ENCODE measurements at regions of chr9 and their contacts with region 1.

Region 1: GRCh38 chr9:109451311-109452025 is 46.6 kb downstream of the PTPN3 start:
- DNase-seq: no peak
- ATAC-seq: no peak
- H3K4me3 Mint-ChIP-seq: no peak overlapping the region
- H3K27ac Mint-ChIP-seq: no peak overlapping the region
- H3K4me1 Mint-ChIP-seq: peaks cover 21% of the 10 kb centered on the region
- H3K27me3 Mint-ChIP-seq: peaks cover 18% of the 10 kb centered on the region

Region 2: GRCh38 chr9:109411798-109412352 is 39.6 kb before region 1 on chr9:
- CTCF ChIA-PET with region 1: interaction called, 13 read pairs
- POLR2A ChIA-PET with region 1: no interaction called
- DNase-seq: peak; percentile 49
- ATAC-seq: peak; percentile 63
- H3K4me3 Mint-ChIP-seq: no peak overlapping the region
- H3K27ac Mint-ChIP-seq: no peak overlapping the region
- H3K4me1 Mint-ChIP-seq: peaks cover 24% of the 10 kb centered on the region
- H3K27me3 Mint-ChIP-seq: peaks cover 11% of the 10 kb centered on the region

Region 3: GRCh38 chr9:109469646-109470358 is 18.3 kb after region 1 on chr9:
- CTCF ChIA-PET with region 1: interaction called, 70 read pairs
- POLR2A ChIA-PET with region 1: no interaction called
- DNase-seq: peak; percentile 79
- ATAC-seq: peak; percentile 93
- H3K4me3 Mint-ChIP-seq: no peak overlapping the region
- H3K27ac Mint-ChIP-seq: no peak overlapping the region
- H3K4me1 Mint-ChIP-seq: peaks cover 22% of the 10 kb centered on the region
- H3K27me3 Mint-ChIP-seq: peaks cover 20% of the 10 kb centered on the region

Measured in activated CD8-positive, alpha-beta T cell treated with anti-CD3 and anti-CD28 coated beads, Interleukin-2, amount 10 ng/mL, durations not matched to agents 7 days and 5 days (primary cell).